A673 (cell line): ENCODE measurements at regions of chr16 and their contacts with region 1.

Region 1: GRCh38 chr16:8567750-8568617 is 22.3 kb downstream of the TMEM114 start:
- DNase-seq: peak; percentile 98
- H3K4me3 ChIP-seq: no peak overlapping the region
- H3K27ac ChIP-seq: peak overlapping the region; percentile 100
- H3K4me1 ChIP-seq: peaks cover 43% of the 10 kb centered on the region
- H3K27me3 ChIP-seq: no peaks in the 10 kb centered on the region
- CTCF ChIP-seq: peak; percentile 99

Region 2: GRCh38 chr16:8797364-8798173 is 229.6 kb after region 1 on chr16 and contains the starts of genes PMM2 and TMEM186:
- CTCF ChIA-PET with region 1: no interaction called
- POLR2A ChIA-PET with region 1: no interaction called
- intact Hi-C with region 1: loop called (anchors 1 kb)
- DNase-seq: peak; percentile 98
- H3K4me3 ChIP-seq: peak within 1 kb of the TSS; percentile 79
- H3K27ac ChIP-seq: peak within 1 kb of the TSS; percentile 75
- H3K4me1 ChIP-seq: peaks cover 12% of the 10 kb centered on the region
- H3K27me3 ChIP-seq: no peaks in the 10 kb centered on the region
- CTCF ChIP-seq: no peak
- total RNA-seq, gene PMM2: 44.3 and 54.8 TPM in 2 replicates
- total RNA-seq, gene TMEM186: 13.3 and 13.5 TPM in 2 replicates

Region 3: GRCh38 chr16:8850279-8850885 is 282.4 kb after region 1 on chr16:
- CTCF ChIA-PET with region 1: no interaction called
- POLR2A ChIA-PET with region 1: no interaction called
- intact Hi-C with region 1: no loop called
- DNase-seq: no peak
- H3K4me3 ChIP-seq: no peak overlapping the region
- H3K27ac ChIP-seq: peak overlapping the region; percentile 34
- H3K4me1 ChIP-seq: peaks cover 10% of the 10 kb centered on the region
- H3K27me3 ChIP-seq: no peaks in the 10 kb centered on the region
- CTCF ChIP-seq: no peak

Region 4: DNA sequence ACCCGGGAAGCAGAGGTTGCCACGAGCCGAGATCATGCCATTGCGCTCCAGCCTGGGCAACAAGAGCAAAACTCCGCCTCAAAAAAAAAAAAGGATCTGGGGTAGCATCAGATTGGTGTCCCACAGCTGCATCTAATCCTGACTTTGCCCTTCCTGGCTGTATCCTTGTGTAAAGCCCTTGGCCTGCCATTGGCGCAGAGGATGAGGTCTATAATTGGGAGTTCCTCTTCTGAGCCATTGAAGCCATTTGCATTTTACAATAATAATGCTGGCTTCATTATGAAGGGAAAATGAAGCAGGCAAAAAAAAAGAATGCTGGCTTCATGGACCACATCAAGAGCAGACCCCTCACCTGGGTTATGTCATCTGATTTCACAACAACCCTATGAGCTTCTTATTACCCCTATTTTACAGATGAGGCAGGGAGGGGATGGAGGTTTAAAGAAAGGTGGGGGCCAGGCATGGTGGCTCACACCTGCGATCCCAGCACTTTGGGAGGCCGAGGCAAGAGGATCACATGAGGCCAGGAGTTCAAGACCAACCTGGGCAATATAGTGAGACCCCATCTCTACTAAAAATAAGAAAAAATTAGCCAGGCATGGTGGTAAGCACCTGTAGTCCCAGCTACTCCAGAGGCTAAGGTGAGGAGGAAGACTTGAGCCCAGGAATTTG is 313.0 kb after region 1 on chr16:
- CTCF ChIA-PET with region 1: no interaction called
- POLR2A ChIA-PET with region 1: no interaction called
- intact Hi-C with region 1: loop called (anchors 1 kb)
- DNase-seq: no peak
- H3K4me3 ChIP-seq: no peak overlapping the region
- H3K27ac ChIP-seq: no peak overlapping the region
- H3K4me1 ChIP-seq: no peaks in the 10 kb centered on the region
- H3K27me3 ChIP-seq: no peaks in the 10 kb centered on the region
- CTCF ChIP-seq: no peak